K562 (cell line): ENCODE measurements at regions of chr2 and their contacts with region 1.

Region 1: GRCh38 chr2:37877457-37878315 is 47.4 kb upstream of the RMDN2 start:
- DNase-seq: peak; percentile 59 to 69 (median 66)
- ATAC-seq: peak; percentile 90
- H3K4me3 ChIP-seq: no peak overlapping the region
- H3K27ac ChIP-seq: no peak overlapping the region
- H3K4me1 ChIP-seq: no peaks in the 10 kb centered on the region
- H3K27me3 ChIP-seq: peaks cover 33 to 54% of the 10 kb centered on the region in 2 experiments
- CTCF ChIP-seq: peak; percentile 52 to 86 (median 62); a peak in 5 of 6 replicates
- EP300 ChIP-seq: no peak
- POLR2A ChIP-seq: no peak
- RAD21 ChIP-seq: peak; percentile 84 to 86

Region 2: GRCh38 chr2:36785179-36785795 is 1092.4 kb before region 1 on chr2:
- CTCF ChIA-PET with region 1: no interaction called
- POLR2A ChIA-PET with region 1: no interaction called
- in situ Hi-C with region 1: loop called (anchors 25 kb)
- intact Hi-C with region 1: loop called (anchors 1 kb)
- DNase-seq: peak; percentile 73 to 76 (median 76)
- ATAC-seq: peak; percentile 84
- H3K4me3 ChIP-seq: no peak overlapping the region
- H3K27ac ChIP-seq: no peak overlapping the region
- H3K4me1 ChIP-seq: no peaks in the 10 kb centered on the region; a peak in 2 of 5 replicates
- H3K27me3 ChIP-seq: peaks cover 25 to 28% of the 10 kb centered on the region in 2 experiments; a peak in 4 of 5 replicates
- CTCF ChIP-seq: peak; percentile 85 to 92 (median 91)
- EP300 ChIP-seq: no peak
- POLR2A ChIP-seq: no peak
- RAD21 ChIP-seq: peak; percentile 63 to 74

Region 3: GRCh38 chr2:37156857-37157714 is 720.6 kb before region 1 on chr2 and contains the start of gene EIF2AK2:
- CTCF ChIA-PET with region 1: no interaction called
- POLR2A ChIA-PET with region 1: no interaction called
- in situ Hi-C with region 1: loop called (anchors 10 kb)
- intact Hi-C with region 1: loop called (anchors 10 kb)
- DNase-seq: peak; percentile 82 to 94 (median 84)
- ATAC-seq: peak; percentile 97
- H3K4me3 ChIP-seq: peak within 1 kb of the TSS; percentile 73
- H3K27ac ChIP-seq: peak within 1 kb of the TSS; percentile 78
- H3K4me1 ChIP-seq: peaks cover 4 to 16% of the 10 kb centered on the region in 2 experiments; a peak in 4 of 5 replicates
- H3K27me3 ChIP-seq: no peaks in the 10 kb centered on the region
- CTCF ChIP-seq: no peak
- EP300 ChIP-seq: no peak
- POLR2A ChIP-seq: 0 out of 2 replicates have a peak, but pooled peaks have one; percentile 49
- RAD21 ChIP-seq: no peak
- polyA plus RNA-seq, gene EIF2AK2: 3.8 to 5.6 TPM

Region 4: DNA sequence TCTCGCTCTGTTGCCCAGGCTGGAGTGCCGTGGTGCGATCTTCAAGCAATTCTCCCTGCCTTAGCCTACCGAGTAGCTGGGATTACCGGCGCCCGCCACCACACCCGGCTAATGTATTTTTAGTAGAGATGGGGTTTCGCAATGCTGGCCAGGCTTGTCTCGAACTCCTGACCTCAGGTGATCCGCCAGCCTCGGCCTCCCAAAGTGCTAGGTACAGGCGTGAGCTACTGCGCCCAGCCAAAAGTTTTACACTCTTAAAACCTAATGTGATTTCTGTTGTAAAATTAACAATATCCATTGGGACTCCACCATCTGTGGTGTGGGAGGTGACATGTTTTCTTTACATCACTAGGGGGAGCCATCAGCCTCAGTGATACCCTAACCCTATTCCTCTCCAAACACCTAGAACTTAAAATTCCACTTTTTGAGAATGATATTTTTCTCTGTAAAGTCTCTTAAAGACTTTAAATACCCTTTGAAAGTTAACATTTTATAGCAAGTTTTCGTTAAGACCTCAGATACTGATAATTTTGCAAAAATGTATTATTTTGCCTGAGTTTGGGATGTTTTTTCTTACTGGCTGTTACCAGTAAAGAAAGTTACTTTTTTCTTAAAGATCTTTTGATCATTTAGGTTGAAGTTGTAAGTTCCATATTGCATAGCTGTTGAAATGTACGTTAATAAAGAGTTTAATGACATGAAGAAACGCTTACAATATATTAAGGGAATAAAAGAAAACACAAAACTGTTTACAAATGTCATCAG is 709.3 kb before region 1 on chr2:
- CTCF ChIA-PET with region 1: no interaction called
- POLR2A ChIA-PET with region 1: no interaction called
- in situ Hi-C with region 1: no loop called
- intact Hi-C with region 1: loop called (anchors 10 kb)
- DNase-seq: peak; percentile 61 to 74 (median 64)
- ATAC-seq: peak; percentile 99
- H3K4me3 ChIP-seq: no peak overlapping the region
- H3K27ac ChIP-seq: no peak overlapping the region
- H3K4me1 ChIP-seq: no peaks in the 10 kb centered on the region
- H3K27me3 ChIP-seq: no peaks in the 10 kb centered on the region
- CTCF ChIP-seq: peak; percentile 52 to 80 (median 77)
- EP300 ChIP-seq: no peak
- POLR2A ChIP-seq: no peak
- RAD21 ChIP-seq: peak; percentile 13 to 69; a peak in 2 of 4 replicates

Region 5: DNA sequence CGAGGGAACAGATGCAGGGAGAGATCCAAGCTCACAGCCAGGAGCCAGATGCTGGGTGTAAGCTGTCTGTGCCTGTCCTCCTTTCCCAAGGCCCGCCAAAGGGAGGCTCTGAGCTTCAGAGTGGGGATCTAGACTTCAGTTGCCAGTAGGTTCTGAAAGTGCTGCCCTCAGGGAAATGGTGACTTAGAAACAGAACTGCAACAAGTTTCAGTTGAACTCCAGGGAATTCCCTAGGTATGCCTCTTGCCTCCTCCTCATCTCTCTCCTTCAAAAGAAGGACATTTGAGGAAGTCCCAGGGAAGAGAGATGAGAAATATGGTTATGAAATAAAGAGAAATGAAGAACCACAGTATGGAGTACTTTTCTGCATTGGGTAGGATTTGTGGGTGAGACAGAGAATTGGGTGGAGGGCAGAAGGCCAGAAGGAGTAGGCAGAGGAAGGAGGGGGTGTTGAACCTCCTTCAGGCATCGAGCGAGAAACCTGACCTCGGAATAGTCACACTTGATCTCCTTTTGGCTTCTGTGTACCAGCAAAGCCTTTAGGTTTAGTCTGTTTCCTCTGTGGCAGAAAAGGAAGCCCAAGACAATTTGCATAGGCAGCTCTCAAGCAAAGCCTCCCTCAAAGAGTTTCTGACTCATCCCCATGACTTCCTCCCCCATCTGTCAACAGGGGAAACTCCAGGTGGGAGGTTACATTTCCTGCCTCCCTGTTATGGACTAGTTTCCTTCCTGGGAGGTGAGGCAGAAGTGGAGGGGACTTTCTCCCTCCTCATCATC is 487.5 kb before region 1 on chr2:
- CTCF ChIA-PET with region 1: interaction called, 14 read pairs
- POLR2A ChIA-PET with region 1: no interaction called
- in situ Hi-C with region 1: loop called (anchors 5 kb)
- intact Hi-C with region 1: no loop called
- DNase-seq: peak; percentile 27 to 55 (median 39)
- ATAC-seq: peak; percentile 64
- H3K4me3 ChIP-seq: no peak overlapping the region
- H3K27ac ChIP-seq: no peak overlapping the region
- H3K4me1 ChIP-seq: no peaks in the 10 kb centered on the region; a peak in 2 of 5 replicates
- H3K27me3 ChIP-seq: peaks cover 11 to 24% of the 10 kb centered on the region in 2 experiments; a peak in 4 of 5 replicates
- CTCF ChIP-seq: no peak
- EP300 ChIP-seq: peak; percentile 52; the same call in 1 of the 2 replicates
- POLR2A ChIP-seq: no peak
- RAD21 ChIP-seq: no peak

Region 6: GRCh38 chr2:37414470-37414949 is 463.2 kb before region 1 on chr2:
- CTCF ChIA-PET with region 1: interaction called, 11 read pairs
- POLR2A ChIA-PET with region 1: no interaction called
- in situ Hi-C with region 1: no loop called
- intact Hi-C with region 1: loop called (anchors 1 kb)
- DNase-seq: peak; percentile 27 to 62 (median 38)
- ATAC-seq: peak; percentile 87
- H3K4me3 ChIP-seq: no peak overlapping the region
- H3K27ac ChIP-seq: peak overlapping the region; percentile 34; the same call in 1 of the 3 replicates
- H3K4me1 ChIP-seq: peaks cover 3 to 15% of the 10 kb centered on the region in 2 experiments; a peak in 2 of 5 replicates
- H3K27me3 ChIP-seq: peaks cover 0 to 4% of the 10 kb centered on the region in 2 experiments; a peak in 1 of 5 replicates
- CTCF ChIP-seq: peak; percentile 68 to 95 (median 88); a peak in 5 of 6 replicates
- EP300 ChIP-seq: peak; percentile 16; the same call in 1 of the 2 replicates
- POLR2A ChIP-seq: no peak
- RAD21 ChIP-seq: peak; percentile 98 to 99

Region 7: DNA sequence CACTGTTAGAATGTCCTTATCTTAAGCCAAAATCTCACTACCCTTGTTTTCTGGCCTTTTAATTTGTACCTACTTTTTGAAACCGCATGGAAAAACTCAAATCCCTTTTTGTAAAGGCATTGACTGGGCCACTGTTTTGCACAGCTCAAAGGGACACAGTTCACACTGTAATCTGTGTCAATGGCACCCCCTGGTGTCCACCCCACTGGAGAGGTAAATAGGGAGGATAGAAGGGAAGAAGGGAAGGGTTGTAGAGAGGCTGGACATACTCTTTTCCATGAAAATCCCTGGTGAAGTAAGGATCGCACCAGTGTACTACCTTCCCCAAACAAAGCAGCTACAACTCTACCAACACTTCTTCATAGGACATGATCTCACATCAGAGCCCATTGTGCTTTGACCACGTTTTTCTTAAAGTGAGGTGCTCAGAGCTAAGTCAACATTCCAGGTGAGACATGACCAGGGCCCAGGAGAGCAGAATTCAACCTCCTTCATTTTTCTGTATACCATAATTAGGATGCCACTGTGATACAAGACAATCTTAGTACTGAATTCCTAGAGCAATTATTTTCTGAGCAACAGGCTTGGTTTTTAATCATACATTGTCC is 45.0 kb before region 1 on chr2:
- CTCF ChIA-PET with region 1: no interaction called
- POLR2A ChIA-PET with region 1: interaction called, 3 read pairs
- in situ Hi-C with region 1: no loop called
- intact Hi-C with region 1: loop called (anchors 5 kb)
- DNase-seq: peak; percentile 49 to 79 (median 62)
- ATAC-seq: peak; percentile 99
- H3K4me3 ChIP-seq: no peak overlapping the region
- H3K27ac ChIP-seq: no peak overlapping the region
- H3K4me1 ChIP-seq: no peaks in the 10 kb centered on the region
- H3K27me3 ChIP-seq: peaks cover 0 to under 1% of the 10 kb centered on the region in 2 experiments; a peak in 1 of 5 replicates
- CTCF ChIP-seq: peak; percentile 69 to 88 (median 73)
- EP300 ChIP-seq: no peak
- POLR2A ChIP-seq: no peak
- RAD21 ChIP-seq: peak; percentile 99